Thyroid gland (tissue), 4 donors: ENCODE measurements at regions of chr2 and their contacts with region 1.

Region 1: GRCh38 chr2:218406209-218406948 is 6.7 kb downstream of the CTDSP1 start:
- DNase-seq: peak; percentile 97
- H3K4me3 ChIP-seq: peak overlapping the region in 2 of 3 donors; percentile 3 to 33
- H3K27ac ChIP-seq: peak overlapping the region; percentile 85 to 92 (median 85)
- H3K4me1 ChIP-seq: peaks cover 31 to 46% of the 10 kb centered on the region in 2 donors
- H3K27me3 ChIP-seq: no peaks in the 10 kb centered on the region
- CTCF ChIP-seq: peak; percentile 58 to 86 (median 81)
- POLR2A ChIP-seq: peak in 1 of 2 donors; percentile 44

Region 2: DNA sequence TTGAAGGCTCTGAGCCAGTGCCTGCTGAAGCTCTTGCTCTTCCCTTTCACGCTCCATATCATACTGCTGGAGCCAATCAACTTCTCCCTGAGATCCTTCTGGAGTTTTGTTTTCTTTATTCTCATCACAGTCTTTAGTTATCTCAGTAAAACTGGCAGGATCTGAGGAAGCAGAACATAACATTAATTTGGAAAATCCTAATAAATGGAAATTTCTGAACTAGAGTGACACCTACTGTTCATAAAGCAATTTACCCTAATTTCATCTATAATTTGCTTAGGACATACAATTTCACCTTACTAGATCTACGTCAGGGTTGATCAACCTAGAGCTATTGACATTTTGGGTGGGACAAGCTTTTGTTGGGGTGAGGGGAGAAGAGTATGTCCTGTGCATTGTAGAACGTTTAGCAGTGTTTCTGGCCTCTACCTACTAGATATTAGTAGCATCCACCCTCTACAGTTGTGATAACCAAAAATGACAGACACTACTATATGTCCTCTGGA is 59.7 kb after region 1 on chr2:
- intact Hi-C with region 1: loop called (anchors 5 kb)
- DNase-seq: no peak
- H3K4me3 ChIP-seq: no peak overlapping the region
- H3K27ac ChIP-seq: peak overlapping the region in 1 of 3 donors; percentile 13
- H3K4me1 ChIP-seq: peaks cover 0 to 11% of the 10 kb centered on the region in 2 donors
- H3K27me3 ChIP-seq: no peaks in the 10 kb centered on the region
- CTCF ChIP-seq: peak in 4 of 6 experiments; percentile 29 to 60 (median 51)
- POLR2A ChIP-seq: no peak

Region 3: DNA sequence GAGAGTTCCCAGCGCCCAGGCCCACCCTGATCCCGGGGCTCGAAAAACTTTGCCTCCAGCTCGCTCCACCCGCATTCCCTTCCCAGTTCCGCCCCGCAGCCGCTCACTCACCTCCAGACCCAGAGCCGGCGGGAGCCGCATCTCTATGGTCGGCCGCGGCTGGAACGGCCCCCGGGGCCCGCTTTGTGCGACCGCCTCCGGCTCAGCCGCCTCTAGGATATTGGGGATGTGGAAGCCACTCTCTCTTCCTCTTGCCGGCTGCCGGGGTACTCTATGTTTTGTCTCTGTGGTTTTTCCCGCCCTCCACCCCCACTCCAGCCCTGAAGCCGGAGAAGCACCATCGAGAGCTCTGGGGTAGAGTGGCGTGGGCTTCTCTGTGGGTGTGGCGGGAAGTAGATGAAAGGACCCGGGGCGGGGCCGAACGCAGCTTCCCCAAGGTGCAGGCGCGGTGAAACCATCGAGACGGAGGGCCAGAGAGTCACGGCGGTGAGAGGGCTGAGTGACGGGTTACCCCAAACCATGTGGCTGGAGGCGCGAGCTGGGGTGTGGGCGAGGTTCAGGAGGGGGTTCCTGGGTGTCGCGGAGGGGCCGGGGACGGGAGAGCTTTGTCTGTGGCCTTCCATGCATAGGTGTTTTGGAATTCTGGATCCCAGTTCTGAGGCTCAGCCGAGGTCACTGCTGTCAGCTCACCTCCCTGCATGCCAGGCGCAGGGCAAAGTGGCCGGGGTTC is 253.0 kb after region 1 on chr2 and contains the starts of genes BCS1L and ZNF142:
- intact Hi-C with region 1: loop called (anchors 10 kb)
- DNase-seq: peak; percentile 93 to 94
- H3K4me3 ChIP-seq: peak within 1 kb of the TSS; percentile 77 to 85 (median 84)
- H3K27ac ChIP-seq: peak within 1 kb of the TSS in 2 of 3 donors; percentile 36 to 70
- H3K4me1 ChIP-seq: peaks cover 6 to 15% of the 10 kb centered on the region in 2 donors
- H3K27me3 ChIP-seq: no peaks in the 10 kb centered on the region
- CTCF ChIP-seq: no peak
- POLR2A ChIP-seq: peak in 1 of 2 donors; percentile 61
- total RNA-seq, gene BCS1L: 17.7 to 38.9 (median 26.5) TPM
- total RNA-seq, gene ZNF142: 15.5 to 33.4 (median 24.0) TPM